Pancreas (tissue), 10 donors: ENCODE measurements at regions of chr1 and their contacts with region 1.

Region 1: DNA sequence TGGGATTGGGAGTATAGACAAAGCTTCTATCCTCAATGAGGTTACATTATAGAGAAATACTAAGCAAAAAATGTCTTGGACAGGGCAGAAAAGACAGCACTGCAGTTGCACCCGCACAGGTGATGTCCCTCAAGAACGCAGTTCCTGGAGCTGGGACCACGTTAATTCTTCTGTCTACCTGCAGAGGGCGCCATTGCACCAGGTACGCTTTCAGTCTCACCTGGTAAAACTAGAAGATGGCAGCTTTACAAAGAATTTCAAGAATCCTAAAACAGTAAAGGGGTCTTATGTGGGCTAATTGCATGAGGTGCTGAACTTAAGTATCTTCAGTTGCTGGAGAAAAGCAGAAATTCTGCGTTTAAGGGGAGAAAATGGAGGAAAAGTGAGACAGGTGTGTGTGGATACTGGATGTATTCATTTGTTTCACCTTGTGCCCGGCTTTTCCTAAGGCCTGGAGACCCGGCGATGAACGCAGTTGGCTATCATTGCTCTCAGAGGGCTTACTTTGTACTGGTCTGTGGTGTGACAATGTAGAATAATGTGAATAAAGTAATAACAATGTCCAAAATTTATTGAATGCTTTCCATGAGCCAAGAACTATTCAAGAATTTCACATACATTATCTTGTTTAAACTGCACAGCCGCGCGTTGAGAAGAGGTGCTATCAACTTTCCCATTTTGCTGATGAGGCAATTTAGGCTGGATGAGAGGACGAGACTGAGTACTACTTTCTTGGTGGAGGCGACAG is 276.3 kb upstream of the GREM2 start:
- DNase-seq: peak; percentile 7 to 76 (median 54)
- ATAC-seq: peak in 3 of 4 donors; percentile 77 to 84 (median 78)
- H3K4me3 ChIP-seq: no peak overlapping the region
- H3K27ac ChIP-seq: no peak overlapping the region
- H3K4me1 ChIP-seq: no peaks in the 10 kb centered on the region
- H3K27me3 ChIP-seq: no peaks in the 10 kb centered on the region
- CTCF ChIP-seq: peak; percentile 70 to 83 (median 72)

Region 2: GRCh38 chr1:241269116-241269515 is 380.9 kb after region 1 on chr1:
- intact Hi-C with region 1: loop called in 2 of 3 experiments (anchors 10 kb)
- DNase-seq: peak in 2 of 6 donors; percentile 16 to 57
- ATAC-seq: peak in 2 of 4 donors; percentile 46 to 51
- H3K4me3 ChIP-seq: no peak overlapping the region
- H3K27ac ChIP-seq: no peak overlapping the region
- H3K4me1 ChIP-seq: no peaks in the 10 kb centered on the region
- H3K27me3 ChIP-seq: no peaks in the 10 kb centered on the region
- CTCF ChIP-seq: no peak

Region 3: GRCh38 chr1:241972703-241973369 is 1084.6 kb after region 1 on chr1:
- intact Hi-C with region 1: loop called in 1 of 3 experiments (anchors 10 kb)
- DNase-seq: no peak
- ATAC-seq: no peak
- H3K4me3 ChIP-seq: no peak overlapping the region
- H3K27ac ChIP-seq: no peak overlapping the region
- H3K4me1 ChIP-seq: no peaks in the 10 kb centered on the region
- H3K27me3 ChIP-seq: no peaks in the 10 kb centered on the region
- CTCF ChIP-seq: no peak